ENCODE measurements at regions of chr6 and their contacts with region 1.

Region 1: GRCh38 chr6:111259089-111259831 is 172.0 kb downstream of the SLC16A10 start:
- DNase-seq: peak; percentile 99
- H3K4me3 Mint-ChIP-seq: peak overlapping the region; percentile 73
- H3K27ac Mint-ChIP-seq: peak overlapping the region; percentile 79
- H3K4me1 Mint-ChIP-seq: peaks cover 23% of the 10 kb centered on the region
- H3K27me3 Mint-ChIP-seq: peaks cover 9% of the 10 kb centered on the region
- CTCF ChIP-seq: peak; percentile 93

Region 2: GRCh38 chr6:111057074-111057752 is 202.0 kb before region 1 on chr6:
- CTCF ChIA-PET with region 1: interaction called, 6 read pairs
- POLR2A ChIA-PET with region 1: no interaction called
- intact Hi-C with region 1: loop called (anchors 1 kb)
- DNase-seq: peak; percentile 62
- H3K4me3 Mint-ChIP-seq: no peak overlapping the region
- H3K27ac Mint-ChIP-seq: no peak overlapping the region
- H3K4me1 Mint-ChIP-seq: no peaks in the 10 kb centered on the region
- H3K27me3 Mint-ChIP-seq: peaks cover 40% of the 10 kb centered on the region
- CTCF ChIP-seq: peak; percentile 56

Region 3: DNA sequence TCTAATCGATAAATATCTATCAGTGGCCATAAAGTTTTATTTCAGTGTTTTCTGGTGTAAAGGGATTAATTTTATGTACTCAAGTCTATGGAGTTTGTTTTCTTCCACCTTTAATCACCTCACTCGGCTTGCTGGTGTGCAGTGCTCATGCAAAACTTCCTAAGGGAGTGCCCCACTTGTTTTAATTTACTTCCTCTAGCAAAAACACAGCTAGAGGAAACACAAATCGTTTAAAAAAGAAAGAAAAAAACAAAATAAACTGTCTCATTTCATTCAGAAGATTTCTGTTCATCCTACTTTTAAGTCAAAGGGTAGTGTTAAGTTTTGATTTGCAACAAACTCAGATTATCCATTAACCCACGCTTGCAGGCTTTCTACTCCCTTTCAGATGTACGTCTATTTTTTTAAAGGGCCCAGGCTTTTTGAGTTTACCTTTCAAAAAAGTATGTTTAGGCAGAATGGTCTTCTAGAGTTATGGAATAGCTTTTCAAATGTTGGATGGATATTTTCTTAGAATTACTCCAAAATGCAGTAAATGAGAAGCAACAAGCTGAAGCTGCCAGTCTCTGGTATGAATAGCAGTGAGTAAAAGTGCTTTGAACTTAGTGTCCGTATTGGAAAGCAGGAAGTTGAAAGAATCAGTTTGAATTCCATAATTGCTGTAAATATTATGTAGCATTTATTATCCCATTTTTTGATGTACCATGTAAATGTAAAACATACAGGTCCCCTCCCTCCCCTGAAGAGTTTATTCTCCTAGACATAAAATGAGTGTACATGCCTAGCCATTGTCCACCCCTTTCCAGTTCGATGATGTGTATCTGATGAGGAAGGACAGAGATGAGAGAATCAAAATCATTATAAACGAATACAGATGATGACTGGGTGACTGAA is 58.7 kb before region 1 on chr6:
- CTCF ChIA-PET with region 1: no interaction called
- POLR2A ChIA-PET with region 1: no interaction called
- intact Hi-C with region 1: no loop called
- DNase-seq: no peak
- H3K4me3 Mint-ChIP-seq: no peak overlapping the region
- H3K27ac Mint-ChIP-seq: no peak overlapping the region
- H3K4me1 Mint-ChIP-seq: no peaks in the 10 kb centered on the region
- H3K27me3 Mint-ChIP-seq: no peaks in the 10 kb centered on the region
- CTCF ChIP-seq: no peak

Region 4: GRCh38 chr6:111230351-111231089 is 28.7 kb before region 1 on chr6:
- CTCF ChIA-PET with region 1: interaction called, 6 read pairs
- POLR2A ChIA-PET with region 1: interaction called, 22 read pairs
- intact Hi-C with region 1: no loop called
- DNase-seq: peak; percentile 72
- H3K4me3 Mint-ChIP-seq: no peak overlapping the region
- H3K27ac Mint-ChIP-seq: no peak overlapping the region
- H3K4me1 Mint-ChIP-seq: peaks cover 12% of the 10 kb centered on the region
- H3K27me3 Mint-ChIP-seq: peaks cover 37% of the 10 kb centered on the region
- CTCF ChIP-seq: no peak

Region 5: GRCh38 chr6:111269401-111269970 is 10.2 kb after region 1 on chr6:
- CTCF ChIA-PET with region 1: interaction called, 22 read pairs
- POLR2A ChIA-PET with region 1: interaction called, 7 read pairs
- intact Hi-C with region 1: no loop called
- DNase-seq: no peak
- H3K4me3 Mint-ChIP-seq: no peak overlapping the region
- H3K27ac Mint-ChIP-seq: peak overlapping the region; percentile 12
- H3K4me1 Mint-ChIP-seq: no peaks in the 10 kb centered on the region
- H3K27me3 Mint-ChIP-seq: no peaks in the 10 kb centered on the region
- CTCF ChIP-seq: no peak

Region 6: DNA sequence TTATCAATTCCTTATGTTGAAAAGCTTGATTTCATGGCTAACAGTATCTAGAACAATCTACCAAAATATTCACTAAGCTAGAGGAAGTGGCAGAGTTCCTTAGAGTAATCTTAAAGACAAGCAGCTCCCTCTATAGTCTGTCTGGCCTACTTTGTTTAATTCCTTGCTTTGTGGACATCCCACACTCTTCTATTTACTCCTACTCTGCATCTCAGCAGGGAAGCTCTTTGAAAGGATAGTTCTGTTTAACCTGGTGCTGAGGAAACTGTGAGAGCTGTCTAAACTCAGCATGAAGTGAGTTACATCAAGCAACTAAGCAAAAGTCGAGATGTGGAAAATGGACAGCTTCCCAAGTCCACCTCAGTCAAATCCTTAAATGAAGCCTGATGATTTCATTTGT is 219.5 kb after region 1 on chr6:
- CTCF ChIA-PET with region 1: interaction called, 17 read pairs
- POLR2A ChIA-PET with region 1: interaction called, 9 read pairs
- intact Hi-C with region 1: loop called (anchors 1 kb)
- DNase-seq: peak; percentile 73
- H3K4me3 Mint-ChIP-seq: peak overlapping the region; percentile 39
- H3K27ac Mint-ChIP-seq: peak overlapping the region; percentile 35
- H3K4me1 Mint-ChIP-seq: peaks cover 38% of the 10 kb centered on the region
- H3K27me3 Mint-ChIP-seq: no peaks in the 10 kb centered on the region
- CTCF ChIP-seq: peak; percentile 39

Region 7: GRCh38 chr6:111503207-111503606 is 243.9 kb after region 1 on chr6:
- CTCF ChIA-PET with region 1: no interaction called
- POLR2A ChIA-PET with region 1: no interaction called
- intact Hi-C with region 1: no loop called
- DNase-seq: peak; percentile 26
- H3K4me3 Mint-ChIP-seq: no peak overlapping the region
- H3K27ac Mint-ChIP-seq: peak overlapping the region; percentile 54
- H3K4me1 Mint-ChIP-seq: peaks cover 5% of the 10 kb centered on the region
- H3K27me3 Mint-ChIP-seq: no peaks in the 10 kb centered on the region
- CTCF ChIP-seq: no peak

Region 8: GRCh38 chr6:111642463-111643158 is 383.4 kb after region 1 on chr6:
- CTCF ChIA-PET with region 1: interaction called, 8 read pairs
- POLR2A ChIA-PET with region 1: no interaction called
- intact Hi-C with region 1: loop called (anchors 1 kb)
- DNase-seq: peak; percentile 80
- H3K4me3 Mint-ChIP-seq: no peak overlapping the region
- H3K27ac Mint-ChIP-seq: no peak overlapping the region
- H3K4me1 Mint-ChIP-seq: peaks cover 4% of the 10 kb centered on the region
- H3K27me3 Mint-ChIP-seq: no peaks in the 10 kb centered on the region
- CTCF ChIP-seq: peak; percentile 65

Measured in MCF 10A (cell line).